Activated CD4-positive, alpha-beta T cell treated with anti-CD3 and anti-CD28 coated beads, Interleukin-2, amount 10 ng/mL, durations not matched to agents 24 days and 14 days (primary cell): ENCODE measurements at regions of chr9 and their contacts with region 1.

Region 1: DNA sequence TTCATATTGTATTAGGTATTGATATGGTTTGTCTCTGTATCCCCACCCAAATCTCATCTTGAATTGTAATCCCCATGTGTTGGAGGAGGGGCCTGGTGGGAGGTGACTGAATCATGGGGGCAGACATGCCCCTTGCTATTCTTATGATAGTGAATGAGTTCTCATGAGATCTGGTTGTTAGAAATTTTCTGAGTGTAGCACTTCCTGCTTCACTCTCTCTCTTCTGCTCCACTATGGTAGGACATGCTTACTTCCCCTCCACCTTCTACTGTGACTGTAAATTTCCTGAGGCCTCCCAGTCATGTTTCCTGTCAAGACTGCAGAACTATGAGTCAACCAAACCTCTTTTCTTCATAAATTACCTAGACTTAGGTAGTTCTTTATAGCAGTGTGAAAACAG is 187.4 kb upstream of the SLC24A2 start:
- DNase-seq: peak; percentile 81
- H3K4me3 Mint-ChIP-seq: peak overlapping the region; percentile 1
- H3K27ac Mint-ChIP-seq: peak overlapping the region; percentile 94
- H3K4me1 Mint-ChIP-seq: peaks cover 33% of the 10 kb centered on the region
- H3K27me3 Mint-ChIP-seq: no peaks in the 10 kb centered on the region

Region 2: GRCh38 chr9:19992556-19992955 is 16.3 kb after region 1 on chr9:
- intact Hi-C with region 1: loop called (anchors 1 kb)
- DNase-seq: no peak
- H3K4me3 Mint-ChIP-seq: no peak overlapping the region
- H3K27ac Mint-ChIP-seq: peak overlapping the region; percentile 61
- H3K4me1 Mint-ChIP-seq: peaks cover 49% of the 10 kb centered on the region
- H3K27me3 Mint-ChIP-seq: no peaks in the 10 kb centered on the region

Region 3: DNA sequence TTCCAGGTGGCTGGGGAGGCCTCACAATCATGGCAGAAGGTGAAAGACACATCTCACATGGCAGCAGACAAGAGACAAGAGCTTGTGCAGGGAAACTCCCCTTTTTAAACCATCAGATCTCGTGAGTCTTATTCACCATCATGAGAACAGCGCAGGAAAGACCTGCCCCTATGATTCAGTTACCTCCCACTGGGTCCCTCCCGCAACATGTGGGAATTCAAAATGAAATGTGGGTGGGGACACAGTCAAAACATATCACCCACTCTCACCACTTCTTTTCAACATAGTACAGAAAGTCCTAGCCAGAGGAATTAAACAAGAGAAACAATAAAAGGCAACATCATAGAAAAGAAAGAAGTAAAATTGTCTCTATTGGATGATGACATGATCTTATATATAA is 36.0 kb after region 1 on chr9:
- intact Hi-C with region 1: loop called (anchors 1 kb)
- DNase-seq: no peak
- H3K4me3 Mint-ChIP-seq: no peak overlapping the region
- H3K27ac Mint-ChIP-seq: no peak overlapping the region
- H3K4me1 Mint-ChIP-seq: peaks cover 29% of the 10 kb centered on the region
- H3K27me3 Mint-ChIP-seq: no peaks in the 10 kb centered on the region

Region 4: DNA sequence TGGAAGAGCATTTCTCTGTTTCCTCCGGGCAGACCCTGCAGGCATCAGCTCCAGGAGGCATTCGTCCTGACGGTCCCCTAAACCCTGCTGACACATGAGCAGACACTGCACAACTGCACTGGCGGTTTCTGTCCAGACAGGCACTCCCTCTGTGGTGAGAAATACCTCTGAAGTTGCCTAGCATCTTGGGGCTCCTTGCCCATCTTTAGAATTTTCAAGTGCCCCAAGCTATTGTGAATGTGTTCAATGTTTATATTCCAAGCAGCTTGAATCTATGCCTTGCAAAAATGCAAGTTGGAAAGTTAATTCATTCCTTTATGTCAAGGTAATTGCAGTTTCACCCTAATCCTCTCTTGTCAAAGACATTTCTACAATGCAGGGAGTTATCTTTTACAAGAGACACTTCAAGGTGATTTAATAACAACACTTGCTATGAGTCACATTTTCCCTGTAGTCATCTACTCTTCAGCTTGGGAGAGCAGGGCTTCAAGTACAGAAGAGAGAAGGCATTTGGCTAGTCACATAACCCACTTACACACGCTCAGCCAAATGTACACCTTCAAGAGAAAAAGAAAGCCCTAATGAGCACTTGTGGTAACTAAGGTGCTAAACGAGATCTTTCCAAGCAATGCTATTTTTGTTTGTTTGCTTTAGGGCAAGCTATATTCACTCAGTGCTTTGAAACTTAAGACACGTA is 343.6 kb after region 1 on chr9:
- intact Hi-C with region 1: loop called (anchors 1 kb)
- DNase-seq: peak; percentile 80
- H3K4me3 Mint-ChIP-seq: peak overlapping the region; percentile 60
- H3K27ac Mint-ChIP-seq: peak overlapping the region; percentile 94
- H3K4me1 Mint-ChIP-seq: peaks cover 78% of the 10 kb centered on the region
- H3K27me3 Mint-ChIP-seq: no peaks in the 10 kb centered on the region

Region 5: DNA sequence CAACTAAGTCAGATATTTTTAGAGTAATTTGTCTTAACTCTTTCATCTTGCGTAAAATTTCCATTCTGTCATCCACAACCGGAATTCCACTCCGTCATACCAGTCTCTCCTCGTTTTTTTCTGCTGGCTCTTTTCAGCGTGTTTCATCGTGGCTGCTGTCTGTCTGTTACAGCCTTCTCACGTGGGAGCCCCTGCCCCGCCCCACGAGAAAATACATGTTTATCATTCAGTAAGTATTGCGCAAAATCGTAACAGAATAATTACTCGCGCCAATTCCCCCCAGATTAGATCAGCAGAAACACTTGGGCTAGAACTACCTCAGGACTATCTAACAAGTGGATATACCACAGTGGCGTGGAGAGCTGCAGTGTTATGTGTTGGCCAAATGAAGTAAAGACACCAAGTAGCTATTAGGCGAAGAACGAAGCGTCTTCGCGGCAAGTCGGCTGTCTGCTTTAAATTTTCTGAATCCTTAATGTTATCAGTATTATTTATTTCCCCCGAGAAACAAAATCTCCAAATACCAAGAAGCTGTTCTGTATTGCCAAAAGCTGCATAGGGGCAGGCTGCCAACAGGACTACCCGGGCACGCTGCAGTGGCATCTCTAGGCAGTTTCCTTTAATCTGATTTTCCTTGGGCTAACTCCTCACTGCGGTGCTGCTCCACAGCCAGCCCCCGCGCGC is 707.3 kb after region 1 on chr9:
- intact Hi-C with region 1: loop called (anchors 5 kb)
- DNase-seq: peak; percentile 80
- H3K4me3 Mint-ChIP-seq: peak overlapping the region; percentile 90
- H3K27ac Mint-ChIP-seq: peak overlapping the region; percentile 92
- H3K4me1 Mint-ChIP-seq: peaks cover 20% of the 10 kb centered on the region
- H3K27me3 Mint-ChIP-seq: no peaks in the 10 kb centered on the region